ENCODE measurements at regions of chr6 and their contacts with region 1.

Region 1: DNA sequence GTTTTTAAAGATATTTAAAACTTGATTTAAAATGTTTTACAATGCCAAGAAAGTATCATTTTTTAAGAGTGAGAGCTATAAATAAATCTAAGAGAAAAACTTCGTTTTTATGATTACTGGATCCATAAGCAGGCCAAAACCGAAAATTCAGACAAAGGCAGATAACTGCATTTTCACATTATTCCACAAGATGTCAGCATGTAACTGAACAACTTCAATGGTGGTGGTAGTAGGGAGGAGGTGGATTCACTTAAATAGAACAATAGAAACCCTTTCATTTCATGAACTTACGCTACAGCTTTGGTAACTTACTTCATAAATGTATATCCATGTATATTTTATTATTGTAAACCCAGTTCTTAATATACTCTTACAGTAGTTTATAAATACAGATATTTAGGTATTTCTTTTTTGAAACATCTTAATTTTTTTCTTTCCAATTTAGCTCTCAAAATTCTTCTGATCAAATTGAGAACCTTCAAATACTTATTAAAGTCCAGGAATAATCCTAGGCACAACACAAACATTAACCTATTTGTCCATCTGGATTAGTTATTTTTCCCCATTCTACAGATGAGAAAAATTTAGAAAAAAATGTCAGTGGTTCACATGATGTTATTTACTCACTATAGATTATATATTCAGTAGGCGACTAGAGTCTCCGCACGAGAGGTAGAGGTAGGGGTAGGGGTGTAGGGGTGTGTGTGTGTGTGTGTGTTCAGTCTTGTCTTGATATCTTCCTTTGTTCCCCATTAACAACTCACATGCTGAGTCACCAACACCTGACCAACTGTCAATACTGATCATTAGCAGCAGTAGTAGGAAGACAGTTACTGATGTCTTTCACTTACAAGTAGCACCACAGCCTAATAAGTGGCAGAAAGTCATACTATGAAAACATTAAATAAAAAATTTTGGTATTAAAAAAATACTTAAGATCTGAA is 111.5 kb downstream of the ARHGAP18 start:
- DNase-seq: peak; percentile 21
- H3K4me3 ChIP-seq: no peak overlapping the region
- H3K27ac ChIP-seq: no peak overlapping the region; a peak in 1 of 4 replicates
- H3K4me1 ChIP-seq: peaks cover 0 to 6% of the 10 kb centered on the region in 2 experiments; a peak in 1 of 4 replicates
- H3K27me3 ChIP-seq: no peaks in the 10 kb centered on the region
- CTCF ChIP-seq: peak; percentile 89
- EP300 ChIP-seq: no peak
- RAD21 ChIP-seq: peak; percentile 87

Region 2: GRCh38 chr6:129525055-129525454 is 73.5 kb before region 1 on chr6:
- CTCF ChIA-PET with region 1: no interaction called
- POLR2A ChIA-PET with region 1: no interaction called
- DNase-seq: no peak
- H3K4me3 ChIP-seq: no peak overlapping the region
- H3K27ac ChIP-seq: no peak overlapping the region
- H3K4me1 ChIP-seq: no peaks in the 10 kb centered on the region
- H3K27me3 ChIP-seq: no peaks in the 10 kb centered on the region
- CTCF ChIP-seq: no peak
- EP300 ChIP-seq: no peak
- RAD21 ChIP-seq: no peak

Region 3: GRCh38 chr6:129565366-129565765 is 33.1 kb before region 1 on chr6:
- CTCF ChIA-PET with region 1: no interaction called
- POLR2A ChIA-PET with region 1: no interaction called
- DNase-seq: no peak
- H3K4me3 ChIP-seq: no peak overlapping the region
- H3K27ac ChIP-seq: 0 out of 4 replicates have a peak overlapping the region, but pooled peaks of 1 of the 2 experiments have one; percentile 14
- H3K4me1 ChIP-seq: no peaks in the 10 kb centered on the region
- H3K27me3 ChIP-seq: no peaks in the 10 kb centered on the region
- CTCF ChIP-seq: no peak
- EP300 ChIP-seq: no peak
- RAD21 ChIP-seq: no peak

Region 4: GRCh38 chr6:129744201-129744879 is 145.8 kb after region 1 on chr6:
- CTCF ChIA-PET with region 1: interaction called, 19 read pairs
- POLR2A ChIA-PET with region 1: no interaction called
- DNase-seq: no peak
- H3K4me3 ChIP-seq: no peak overlapping the region
- H3K27ac ChIP-seq: peak overlapping the region; percentile 77 to 90
- H3K4me1 ChIP-seq: peaks cover 0 to 35% of the 10 kb centered on the region in 2 experiments; a peak in 3 of 4 replicates
- H3K27me3 ChIP-seq: no peaks in the 10 kb centered on the region
- CTCF ChIP-seq: no peak
- EP300 ChIP-seq: peak in 1 of 2 experiments; percentile 83; a peak in 2 of 4 replicates
- RAD21 ChIP-seq: no peak

Region 5: DNA sequence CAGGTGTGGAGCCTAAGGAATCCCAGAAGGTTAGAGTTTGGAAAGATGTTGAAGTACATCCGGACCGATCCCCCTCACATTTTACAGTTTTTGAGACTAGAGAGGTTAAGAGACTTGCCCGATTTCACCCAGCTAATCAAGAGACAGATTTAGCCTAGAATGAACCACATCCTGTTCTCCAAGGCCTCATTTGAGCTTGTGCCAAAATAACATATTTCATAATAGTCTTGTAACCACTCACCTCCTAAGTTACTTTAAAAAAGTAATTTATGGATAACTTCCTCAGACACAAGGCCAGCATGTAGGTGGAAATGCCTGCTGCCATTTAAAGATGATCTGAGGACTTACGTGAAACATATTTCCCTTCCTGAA is 151.2 kb after region 1 on chr6:
- CTCF ChIA-PET with region 1: interaction called, 19 read pairs
- POLR2A ChIA-PET with region 1: no interaction called
- DNase-seq: no peak
- H3K4me3 ChIP-seq: peak overlapping the region in 1 of 2 experiments; percentile 15; a peak in 1 of 4 replicates
- H3K27ac ChIP-seq: peak overlapping the region; percentile 78 to 96
- H3K4me1 ChIP-seq: peaks cover 0 to 64% of the 10 kb centered on the region in 2 experiments; a peak in 3 of 4 replicates
- H3K27me3 ChIP-seq: no peaks in the 10 kb centered on the region
- CTCF ChIP-seq: no peak
- EP300 ChIP-seq: peak; percentile 18 to 51; a peak in 2 of 4 replicates
- RAD21 ChIP-seq: no peak

Region 6: GRCh38 chr6:129759796-129760605 is 161.5 kb after region 1 on chr6:
- CTCF ChIA-PET with region 1: interaction called, 11 read pairs
- POLR2A ChIA-PET with region 1: no interaction called
- DNase-seq: no peak
- H3K4me3 ChIP-seq: no peak overlapping the region
- H3K27ac ChIP-seq: peak overlapping the region in 1 of 2 experiments; percentile 1; a peak in 1 of 4 replicates
- H3K4me1 ChIP-seq: peaks cover 0 to 4% of the 10 kb centered on the region in 2 experiments; a peak in 1 of 4 replicates
- H3K27me3 ChIP-seq: no peaks in the 10 kb centered on the region
- CTCF ChIP-seq: no peak
- EP300 ChIP-seq: no peak
- RAD21 ChIP-seq: no peak

Region 7: GRCh38 chr6:129774697-129775447 is 176.4 kb after region 1 on chr6:
- CTCF ChIA-PET with region 1: interaction called, 10 read pairs
- POLR2A ChIA-PET with region 1: no interaction called
- DNase-seq: peak; percentile 64
- H3K4me3 ChIP-seq: peak overlapping the region; percentile 21 to 28; a peak in 2 of 4 replicates
- H3K27ac ChIP-seq: no peak overlapping the region
- H3K4me1 ChIP-seq: no peaks in the 10 kb centered on the region; a peak in 1 of 4 replicates
- H3K27me3 ChIP-seq: no peaks in the 10 kb centered on the region
- CTCF ChIP-seq: peak; percentile 93
- EP300 ChIP-seq: no peak
- RAD21 ChIP-seq: peak; percentile 59